ENCODE measurements at regions of chr7 and their contacts with region 1.

Region 1: GRCh38 chr7:158704704-158705468 is at the start of gene NCAPG2:
- DNase-seq: peak; percentile 93 to 100 (median 96)

Region 2: GRCh38 chr7:158760936-158761335 is 56.0 kb after region 1 on chr7:
- intact Hi-C with region 1: no loop called
- DNase-seq: no peak

Region 3: GRCh38 chr7:158829342-158830210 is 124.7 kb after region 1 on chr7 and contains the start of gene ESYT2:
- intact Hi-C with region 1: loop called (anchors 1 kb)
- DNase-seq: peak; percentile 98 to 100 (median 100)

Region 4: GRCh38 chr7:158856883-158857668 is 152.2 kb after region 1 on chr7:
- intact Hi-C with region 1: loop called (anchors 10 kb)
- DNase-seq: no peak

Measured in posterior cingulate gyrus (tissue), 11 donors.